ENCODE measurements at regions of chr13 and their contacts with region 1.

Region 1: GRCh38 chr13:78978381-78978998 is 319.5 kb upstream of the OBI1 start:
- DNase-seq: peak; percentile 8
- H3K4me3 Mint-ChIP-seq: no peak overlapping the region
- H3K27ac Mint-ChIP-seq: no peak overlapping the region
- H3K4me1 Mint-ChIP-seq: no peaks in the 10 kb centered on the region
- H3K27me3 Mint-ChIP-seq: no peaks in the 10 kb centered on the region
- CTCF ChIP-seq: peak; percentile 17

Region 2: DNA sequence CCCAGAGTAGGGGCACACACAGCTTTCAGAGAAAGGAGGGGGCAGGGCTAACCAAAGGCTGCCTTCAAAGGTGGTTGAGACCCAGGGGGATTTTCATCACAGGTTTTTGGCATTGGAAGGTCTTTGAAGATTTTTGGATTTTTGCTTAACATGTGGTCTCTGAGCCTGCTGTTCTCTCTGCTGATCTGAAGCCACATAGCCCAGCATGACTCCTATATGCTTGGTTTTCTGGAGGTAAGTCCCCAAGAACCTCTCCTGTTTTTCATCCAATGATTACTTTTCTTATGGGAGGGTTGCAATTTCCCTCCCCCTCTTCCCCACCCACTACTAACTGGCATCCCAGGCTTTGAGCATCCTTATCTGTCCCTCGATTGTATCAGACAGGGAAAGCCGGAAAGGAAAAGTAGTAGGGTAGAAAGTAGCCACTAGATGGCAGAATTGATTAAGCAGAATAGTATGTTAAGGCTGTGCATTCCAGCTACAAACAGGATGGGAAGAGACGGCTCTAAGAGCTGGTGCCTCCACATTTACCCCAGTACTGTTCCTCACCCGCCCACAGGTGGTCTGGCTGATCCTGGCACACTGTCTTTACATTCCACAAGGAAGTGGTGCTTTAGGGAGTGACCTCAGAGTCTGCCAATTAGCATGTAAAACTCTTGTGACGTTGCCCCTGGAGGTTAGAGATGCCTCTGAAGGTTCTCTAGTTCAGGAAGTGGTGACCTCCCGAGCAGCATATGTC is 840.9 kb before region 1 on chr13:
- CTCF ChIA-PET with region 1: interaction called, 3 read pairs
- intact Hi-C with region 1: loop called (anchors 1 kb)
- DNase-seq: peak; percentile 1
- H3K4me3 Mint-ChIP-seq: no peak overlapping the region
- H3K27ac Mint-ChIP-seq: no peak overlapping the region
- H3K4me1 Mint-ChIP-seq: no peaks in the 10 kb centered on the region
- H3K27me3 Mint-ChIP-seq: no peaks in the 10 kb centered on the region
- CTCF ChIP-seq: no peak

Region 3: DNA sequence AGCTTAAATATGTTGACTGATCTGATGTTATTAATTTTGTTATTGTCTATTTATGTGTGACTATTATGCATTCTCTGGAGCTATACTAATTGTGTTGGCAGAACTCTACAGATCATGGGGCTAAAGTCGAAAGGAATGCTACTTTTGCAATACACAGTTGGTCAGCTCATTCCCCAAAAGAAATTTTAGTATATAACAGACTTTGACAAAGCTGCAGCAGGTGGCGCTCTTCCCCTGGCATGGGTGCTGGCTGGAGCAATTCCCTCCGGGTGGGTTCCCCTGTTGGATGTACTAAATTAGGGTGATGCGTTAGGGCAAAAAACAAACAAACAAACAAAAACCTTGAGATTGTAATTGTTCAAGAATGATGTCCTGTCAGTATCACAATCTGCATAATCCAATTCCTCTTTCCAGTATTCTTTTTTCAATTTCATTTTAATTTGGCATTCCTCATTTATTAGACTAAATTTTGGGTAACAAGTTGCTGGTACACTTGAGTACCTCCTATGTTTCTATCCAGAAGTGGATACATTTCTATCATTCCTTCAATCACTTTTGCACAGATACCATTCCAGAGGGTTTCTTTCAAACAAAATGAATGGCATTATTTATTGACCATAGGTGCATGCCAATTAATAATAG is 737.1 kb before region 1 on chr13:
- CTCF ChIA-PET with region 1: interaction called, 6 read pairs
- intact Hi-C with region 1: loop called (anchors 1 kb)
- DNase-seq: peak; percentile 16
- H3K4me3 Mint-ChIP-seq: no peak overlapping the region
- H3K27ac Mint-ChIP-seq: no peak overlapping the region
- H3K4me1 Mint-ChIP-seq: no peaks in the 10 kb centered on the region
- H3K27me3 Mint-ChIP-seq: no peaks in the 10 kb centered on the region
- CTCF ChIP-seq: peak; percentile 25

Region 4: DNA sequence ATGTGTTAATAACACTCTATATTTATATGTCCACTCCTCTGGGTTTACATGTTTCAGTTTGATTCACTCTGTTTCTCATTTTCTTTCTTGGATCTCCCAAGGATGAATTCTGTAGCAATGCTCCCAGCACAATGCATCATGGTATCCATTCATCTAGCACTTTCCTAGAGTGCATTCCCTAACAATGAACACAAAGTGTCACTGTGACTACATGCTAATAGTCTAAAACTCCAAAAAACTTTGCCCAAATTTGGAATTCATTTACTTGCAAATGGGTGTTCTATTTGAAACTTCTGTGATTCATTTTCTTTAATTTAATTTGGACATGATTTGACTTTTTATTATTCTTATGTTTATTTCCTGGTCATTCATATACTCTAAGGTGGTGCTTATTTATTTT is 661.5 kb before region 1 on chr13:
- CTCF ChIA-PET with region 1: no interaction called
- intact Hi-C with region 1: loop called (anchors 5 kb)
- DNase-seq: no peak
- H3K4me3 Mint-ChIP-seq: no peak overlapping the region
- H3K27ac Mint-ChIP-seq: no peak overlapping the region
- H3K4me1 Mint-ChIP-seq: peaks cover 7% of the 10 kb centered on the region
- H3K27me3 Mint-ChIP-seq: no peaks in the 10 kb centered on the region
- CTCF ChIP-seq: no peak

Region 5: DNA sequence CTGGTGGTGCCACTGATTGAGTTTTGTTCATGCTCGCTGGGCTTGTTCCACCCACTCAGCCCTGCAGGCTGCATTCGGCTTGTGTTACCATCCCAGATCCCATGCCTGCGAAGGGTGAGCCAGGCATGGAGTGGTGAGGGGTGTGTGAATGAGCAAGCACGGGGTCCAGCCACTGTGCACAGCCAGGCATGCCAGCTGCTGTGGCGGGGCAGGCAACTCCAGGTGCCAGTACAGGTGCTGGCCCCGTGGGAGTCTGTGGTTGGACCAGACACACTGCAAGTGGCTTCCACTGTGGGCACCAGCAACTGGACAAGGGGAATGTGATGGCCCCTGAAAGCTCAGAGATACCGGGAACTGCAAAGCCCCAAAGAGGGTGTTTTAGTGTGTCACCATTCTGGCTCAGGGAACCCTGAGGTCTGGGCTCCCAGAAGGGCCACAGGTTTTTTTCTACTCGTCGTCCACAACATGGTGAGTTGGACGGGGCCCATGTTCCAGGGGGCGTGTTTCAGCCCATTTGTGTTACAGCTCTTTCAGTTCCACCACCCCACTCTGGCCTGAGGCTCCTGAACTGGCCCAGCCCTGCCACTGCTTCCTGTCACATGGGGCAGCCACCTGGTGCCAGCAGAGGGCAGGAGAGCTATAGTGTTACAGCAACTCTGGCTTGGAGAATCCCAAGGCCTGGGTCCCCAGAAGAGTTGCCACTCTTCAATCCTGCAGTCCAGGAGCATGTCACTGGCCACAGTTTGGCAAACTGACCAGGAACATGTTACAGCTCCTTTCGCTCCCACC is 102.5 kb before region 1 on chr13:
- CTCF ChIA-PET with region 1: no interaction called
- intact Hi-C with region 1: loop called (anchors 10 kb)
- DNase-seq: peak; percentile 11
- H3K4me3 Mint-ChIP-seq: no peak overlapping the region
- H3K27ac Mint-ChIP-seq: no peak overlapping the region
- H3K4me1 Mint-ChIP-seq: no peaks in the 10 kb centered on the region
- H3K27me3 Mint-ChIP-seq: no peaks in the 10 kb centered on the region
- CTCF ChIP-seq: no peak

Region 6: GRCh38 chr13:79011179-79011578 is 32.7 kb after region 1 on chr13:
- CTCF ChIA-PET with region 1: no interaction called
- intact Hi-C with region 1: no loop called
- DNase-seq: no peak
- H3K4me3 Mint-ChIP-seq: no peak overlapping the region
- H3K27ac Mint-ChIP-seq: no peak overlapping the region
- H3K4me1 Mint-ChIP-seq: no peaks in the 10 kb centered on the region
- H3K27me3 Mint-ChIP-seq: no peaks in the 10 kb centered on the region
- CTCF ChIP-seq: no peak

Measured in Calu3 (cell line).